ENCODE measurements at regions of chr11 and their contacts with region 1.

Region 1: DNA sequence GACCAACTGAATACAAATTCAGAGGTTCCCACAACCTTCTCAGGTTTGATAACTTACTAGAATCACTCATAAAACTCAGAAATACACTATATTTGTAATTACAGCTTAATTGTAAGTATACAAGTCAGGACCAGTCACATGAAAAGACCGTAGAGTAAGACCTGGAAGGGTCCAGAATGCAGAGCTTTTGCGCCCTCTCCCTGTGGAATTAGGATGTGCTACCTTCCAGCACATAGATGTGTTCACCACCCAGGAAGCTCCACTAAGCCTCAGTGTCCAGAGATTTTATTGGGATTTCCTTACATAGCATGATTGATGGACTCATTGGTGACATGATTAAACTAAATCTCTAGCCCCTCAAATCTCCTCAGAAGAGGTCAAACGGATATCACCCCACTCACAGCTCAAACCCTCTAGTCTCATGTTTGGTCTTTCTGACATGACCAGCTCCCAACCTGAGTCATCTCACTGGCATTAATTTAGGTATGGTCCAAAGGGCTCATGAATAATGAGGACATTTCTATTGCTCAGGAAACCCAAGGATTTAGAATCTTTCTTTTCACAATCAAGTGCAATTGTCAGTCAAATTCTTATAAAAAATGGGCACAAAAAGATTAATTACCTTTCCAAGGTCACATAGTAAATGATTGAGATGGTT is 77.2 kb upstream of the UBASH3B start:
- DNase-seq: no peak
- H3K4me3 ChIP-seq: no peak overlapping the region
- CTCF ChIP-seq: no peak

Region 2: GRCh38 chr11:122593473-122594420 is 15.4 kb after region 1 on chr11:
- CTCF ChIA-PET with region 1: interaction called, 64 read pairs
- POLR2A ChIA-PET with region 1: no interaction called
- DNase-seq: no peak
- H3K4me3 ChIP-seq: no peak overlapping the region
- CTCF ChIP-seq: no peak

Region 3: DNA sequence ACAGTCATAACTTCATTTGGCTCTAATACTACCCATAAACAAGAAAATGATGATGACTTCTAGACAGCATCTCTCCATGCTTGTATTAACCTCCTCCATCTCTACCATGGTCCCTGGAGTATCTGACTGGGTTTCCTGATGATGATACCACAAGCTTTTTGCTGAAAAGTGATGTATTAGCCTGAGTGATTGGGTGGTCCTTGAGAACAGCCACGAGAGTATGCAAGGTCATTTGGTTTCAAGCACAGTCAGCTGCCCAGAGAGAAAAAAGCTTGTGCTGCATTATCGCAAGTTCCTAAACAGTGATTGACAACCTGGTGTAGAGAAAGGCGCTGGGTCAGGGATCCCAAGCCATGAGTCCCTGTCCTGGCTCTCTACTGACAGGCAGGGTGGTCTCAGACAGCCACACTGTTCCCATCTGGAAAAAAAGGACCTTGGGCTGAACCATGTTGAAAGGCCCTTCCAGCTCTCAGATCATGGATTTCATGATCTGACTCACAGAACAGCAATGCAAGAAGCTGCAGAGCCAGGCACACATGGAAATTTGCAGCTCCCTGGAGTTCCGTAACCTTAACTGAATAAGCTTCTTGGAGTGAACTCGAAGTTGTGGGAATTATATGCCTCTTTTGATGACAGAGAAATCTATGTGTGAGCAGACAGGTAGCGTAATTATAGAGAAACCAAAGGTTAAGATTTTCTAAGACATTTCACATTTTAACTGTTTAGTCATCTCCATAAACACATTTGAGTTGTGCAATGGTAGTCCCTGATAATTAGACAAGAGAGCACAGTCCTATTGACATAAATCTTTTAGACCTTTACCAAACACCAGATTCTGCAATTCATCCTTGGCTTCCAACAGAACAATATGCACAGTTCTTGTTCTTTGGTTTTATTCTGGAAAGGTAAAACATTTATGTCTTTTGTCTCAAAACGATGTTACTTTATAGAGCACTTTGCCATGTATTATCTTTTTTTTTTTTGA is 23.1 kb after region 1 on chr11:
- CTCF ChIA-PET with region 1: interaction called, 64 read pairs
- POLR2A ChIA-PET with region 1: no interaction called
- DNase-seq: peak; percentile 41
- H3K4me3 ChIP-seq: no peak overlapping the region
- CTCF ChIP-seq: no peak